PC-9 (cell line): ENCODE measurements at regions of chr2 and their contacts with region 1.

Region 1: GRCh38 chr2:227503433-227504406 is 31.8 kb downstream of the AGFG1 start:
- DNase-seq: peak; percentile 77 to 94
- H3K4me3 ChIP-seq: peak overlapping the region; percentile 21; the same call in 1 of the 2 replicates
- H3K27ac ChIP-seq: peak overlapping the region; percentile 90
- H3K4me1 ChIP-seq: peaks cover 72% of the 10 kb centered on the region
- H3K27me3 ChIP-seq: no peaks in the 10 kb centered on the region
- CTCF ChIP-seq: no peak

Region 2: DNA sequence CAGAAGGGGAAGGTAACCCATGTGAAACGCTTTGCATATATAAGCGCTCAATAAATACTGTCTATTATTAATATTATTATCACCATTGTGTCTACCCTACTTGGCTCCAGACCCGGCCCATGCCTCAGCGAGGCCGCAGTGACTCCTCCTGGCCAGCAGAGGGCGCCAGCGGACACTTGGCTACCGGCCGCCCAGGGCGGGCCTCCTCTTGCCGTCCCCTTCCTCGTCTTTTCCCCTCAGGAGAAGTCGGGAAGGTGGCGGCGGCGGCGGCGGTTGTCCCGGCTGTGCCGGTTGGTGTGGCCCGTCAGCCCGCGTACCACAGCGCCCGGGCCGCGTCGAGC is 31.8 kb before region 1 on chr2 and contains the start of gene AGFG1:
- CTCF ChIA-PET with region 1: no interaction called
- POLR2A ChIA-PET with region 1: no interaction called
- intact Hi-C with region 1: loop called (anchors 2 kb)
- DNase-seq: peak; percentile 63 to 87
- H3K4me3 ChIP-seq: peak within 1 kb of the TSS; percentile 96
- H3K27ac ChIP-seq: peak within 1 kb of the TSS; percentile 74
- H3K4me1 ChIP-seq: peaks cover 60% of the 10 kb centered on the region
- H3K27me3 ChIP-seq: no peaks in the 10 kb centered on the region
- CTCF ChIP-seq: peak; percentile 96
- total RNA-seq, gene AGFG1: 82.8 and 119 TPM in 2 replicates

Region 3: GRCh38 chr2:227479865-227480475 is 23.8 kb before region 1 on chr2:
- CTCF ChIA-PET with region 1: interaction called, 4 read pairs
- POLR2A ChIA-PET with region 1: interaction called, 12 read pairs
- intact Hi-C with region 1: loop called (anchors 2 kb)
- DNase-seq: no peak
- H3K4me3 ChIP-seq: no peak overlapping the region
- H3K27ac ChIP-seq: peak overlapping the region; percentile 45
- H3K4me1 ChIP-seq: peaks cover 60% of the 10 kb centered on the region
- H3K27me3 ChIP-seq: no peaks in the 10 kb centered on the region
- CTCF ChIP-seq: 0 out of 2 replicates have a peak, but pooled peaks have one; percentile 26

Region 4: GRCh38 chr2:227528803-227529202 is 25.1 kb after region 1 on chr2:
- CTCF ChIA-PET with region 1: no interaction called
- POLR2A ChIA-PET with region 1: no interaction called
- intact Hi-C with region 1: no loop called
- DNase-seq: no peak
- H3K4me3 ChIP-seq: no peak overlapping the region
- H3K27ac ChIP-seq: peak overlapping the region; percentile 16; the same call in 1 of the 2 replicates
- H3K4me1 ChIP-seq: no peaks in the 10 kb centered on the region
- H3K27me3 ChIP-seq: no peaks in the 10 kb centered on the region
- CTCF ChIP-seq: no peak